ENCODE measurements at regions of chr22 and their contacts with region 1.

Region 1: DNA sequence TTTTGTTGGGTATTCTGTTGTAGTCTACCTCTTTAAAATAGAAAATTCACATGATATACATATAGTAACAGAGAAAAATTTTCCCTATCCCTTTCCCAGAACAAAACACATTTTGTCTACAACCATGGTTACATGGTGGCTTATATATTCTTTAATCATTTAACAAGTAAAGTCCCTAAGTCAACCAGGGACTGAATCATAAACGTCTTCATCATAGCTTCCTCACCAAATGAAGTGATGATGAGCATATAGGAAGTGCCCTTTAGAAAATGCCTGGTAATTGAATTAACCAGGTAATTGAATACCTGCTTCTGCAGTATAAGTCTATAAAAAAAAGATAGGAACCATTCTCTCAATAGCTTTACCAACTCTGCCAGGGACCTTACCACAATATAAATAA is 101.2 kb downstream of the APOL5 start:
- DNase-seq: no peak

Region 2: GRCh38 chr22:36134182-36134581 is 315.3 kb after region 1 on chr22:
- intact Hi-C with region 1: loop called in 1 of 2 experiments (anchors 5 kb)
- DNase-seq: no peak

Region 3: DNA sequence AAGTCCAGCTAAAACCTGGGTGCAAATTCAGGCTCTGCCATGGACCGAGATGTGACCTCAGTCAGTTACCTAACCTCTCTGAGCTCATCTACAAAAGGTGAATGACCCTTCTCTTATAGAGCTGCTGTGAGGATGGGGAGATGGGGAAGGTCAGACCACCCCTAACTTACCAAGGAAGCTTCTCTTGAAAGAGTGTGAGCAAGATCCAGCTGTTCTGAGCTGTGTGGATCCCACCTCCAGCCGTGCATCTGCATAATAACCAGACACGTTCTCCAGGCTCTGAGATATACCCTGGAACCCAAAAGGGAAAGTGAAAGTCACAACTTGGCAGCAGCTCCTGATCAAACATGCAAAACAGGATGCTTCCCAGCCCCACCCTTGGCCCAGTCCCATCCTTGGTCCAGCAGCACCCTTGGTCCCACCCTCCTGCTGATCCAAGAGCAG is 341.6 kb after region 1 on chr22 and contains the start of gene APOL3:
- intact Hi-C with region 1: no loop called
- DNase-seq: peak; percentile 91
- total RNA-seq, gene APOL3: 54.5 to 69.2 TPM

Measured in posterior vena cava (tissue), 2 donors.